ENCODE measurements at regions of chr9 and their contacts with region 1.

Region 1: DNA sequence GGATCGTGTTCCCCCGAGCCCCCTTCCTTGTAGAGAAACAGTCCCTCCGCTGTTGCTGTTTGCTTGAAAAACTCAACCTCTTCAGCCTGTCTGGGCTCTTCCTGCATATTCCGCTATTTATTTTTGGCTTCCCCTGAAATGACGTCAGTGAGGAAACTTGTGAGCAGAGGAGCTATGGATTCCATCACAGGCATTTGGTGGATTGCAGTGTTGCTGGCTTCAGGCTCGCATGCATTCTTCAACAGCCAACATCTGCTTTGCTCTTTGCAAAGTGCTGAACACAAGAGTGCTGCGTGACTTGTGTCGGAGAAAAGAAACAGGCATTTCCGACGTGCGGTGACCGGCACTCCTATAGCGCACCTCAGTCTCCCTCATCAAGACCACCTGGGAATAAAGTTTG is 232.7 kb downstream of the RFK start:
- DNase-seq: peak in 3 of 5 donors; percentile 34 to 57 (median 46)
- ATAC-seq: peak; percentile 51 to 86 (median 83)
- H3K4me3 ChIP-seq: peak overlapping the region in 4 of 12 donors; percentile 2 to 18 (median 6)
- H3K27ac ChIP-seq: peak overlapping the region in 5 of 12 donors; percentile 18 to 49 (median 25)
- H3K4me1 ChIP-seq: peaks cover 0 to 25% (median 11%) of the 10 kb centered on the region in 12 donors
- H3K27me3 ChIP-seq: no peaks in the 10 kb centered on the region
- CTCF ChIP-seq: no peak
- POLR2A ChIP-seq: no peak

Region 2: DNA sequence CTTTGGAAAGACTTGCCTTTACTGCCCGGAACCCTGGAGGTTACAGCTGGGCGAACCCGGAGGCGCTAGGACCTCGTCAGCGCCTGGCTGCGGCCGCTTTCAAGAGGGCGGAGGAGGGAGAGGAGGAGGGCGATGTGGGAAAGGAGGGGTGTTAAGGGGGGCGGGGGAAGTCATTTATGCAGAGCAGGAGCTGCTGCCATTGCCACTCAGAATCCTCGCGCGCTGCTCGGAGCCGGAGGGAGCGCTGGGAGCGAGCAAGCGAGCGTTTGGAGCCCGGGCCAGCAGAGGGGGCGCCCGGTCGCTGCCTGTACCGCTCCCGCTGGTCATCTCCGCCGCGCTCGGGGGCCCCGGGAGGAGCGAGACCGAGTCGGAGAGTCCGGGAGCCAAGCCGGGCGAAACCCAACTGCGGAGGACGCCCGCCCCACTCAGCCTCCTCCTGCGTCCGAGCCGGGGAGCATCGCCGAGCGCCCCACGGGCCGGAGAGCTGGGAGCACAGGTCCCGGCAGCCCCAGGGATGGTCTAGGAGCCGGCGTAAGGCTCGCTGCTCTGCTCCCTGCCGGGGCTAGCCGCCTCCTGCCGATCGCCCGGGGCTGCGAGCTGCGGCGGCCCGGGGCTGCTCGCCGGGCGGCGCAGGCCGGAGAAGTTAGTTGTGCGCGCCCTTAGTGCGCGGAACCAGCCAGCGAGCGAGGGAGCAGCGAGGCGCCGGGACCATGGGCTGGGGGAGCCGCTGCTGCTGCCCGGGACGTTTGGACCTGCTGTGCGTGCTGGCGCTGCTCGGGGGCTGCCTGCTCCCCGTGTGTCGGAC is 270.9 kb before region 1 on chr9 and contains the start of gene PCSK5:
- intact Hi-C with region 1: loop called in 1 of 10 experiments (anchors 10 kb)
- DNase-seq: peak; percentile 93 to 94 (median 93)
- ATAC-seq: peak; percentile 97 to 98 (median 98)
- H3K4me3 ChIP-seq: peak within 1 kb of the TSS; percentile 67 to 96 (median 84)
- H3K27ac ChIP-seq: peak within 1 kb of the TSS; percentile 56 to 89 (median 84)
- H3K4me1 ChIP-seq: peaks cover 0 to 29% (median 11%) of the 10 kb centered on the region in 12 donors
- H3K27me3 ChIP-seq: peaks cover 0 to 10% (median 0%) of the 10 kb centered on the region in 9 donors
- CTCF ChIP-seq: peak in 11 of 12 donors; percentile 12 to 62 (median 34)
- POLR2A ChIP-seq: peak in 1 of 2 donors; percentile 90
- total RNA-seq, gene PCSK5: 3.9 to 13.6 (median 6.0) TPM

Region 3: GRCh38 chr9:76109953-76110352 is 51.6 kb before region 1 on chr9:
- intact Hi-C with region 1: no loop called
- DNase-seq: no peak
- ATAC-seq: no peak
- H3K4me3 ChIP-seq: no peak overlapping the region
- H3K27ac ChIP-seq: no peak overlapping the region
- H3K4me1 ChIP-seq: peaks cover 0 to 8% (median 0%) of the 10 kb centered on the region in 12 donors
- H3K27me3 ChIP-seq: no peaks in the 10 kb centered on the region
- CTCF ChIP-seq: no peak
- POLR2A ChIP-seq: no peak

Measured in heart left ventricle (tissue), 16 donors.